PC-3 (cell line): ENCODE measurements at regions of chrX and their contacts with region 1.

Region 1: DNA sequence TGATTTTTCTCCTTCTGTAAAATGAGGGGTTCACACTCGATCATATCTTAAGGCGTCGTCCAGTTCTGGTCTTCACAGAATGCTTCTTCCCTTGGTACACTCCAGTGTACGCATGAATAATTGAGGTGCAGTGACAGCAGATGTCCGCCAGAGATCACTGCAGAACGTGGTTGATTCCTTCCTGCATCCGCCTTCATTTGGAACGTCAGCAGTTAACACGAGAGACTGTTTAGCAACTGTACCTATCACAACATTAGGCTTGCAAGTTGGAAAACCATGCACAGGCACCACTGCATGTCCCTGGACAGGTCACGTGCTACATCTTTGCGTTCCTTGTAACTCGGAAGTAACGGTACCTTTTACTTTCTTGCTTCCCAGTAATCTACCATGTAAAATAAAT is 66.0 kb upstream of the GEMIN8 start:
- DNase-seq: peak; percentile 78
- ATAC-seq: peak; percentile 84
- H3K4me3 ChIP-seq: no peak overlapping the region
- H3K27ac ChIP-seq: no peak overlapping the region
- H3K4me1 ChIP-seq: no peaks in the 10 kb centered on the region
- H3K27me3 ChIP-seq: peaks cover 19% of the 10 kb centered on the region
- CTCF ChIP-seq: peak; percentile 81

Region 2: GRCh38 chrX:14051416-14051815 is 44.3 kb before region 1 on chrX:
- CTCF ChIA-PET with region 1: no interaction called
- POLR2A ChIA-PET with region 1: no interaction called
- intact Hi-C with region 1: loop called (anchors 5 kb)
- DNase-seq: peak; percentile 46
- ATAC-seq: peak; percentile 58; the same call in 1 of the 2 replicates
- H3K4me3 ChIP-seq: no peak overlapping the region
- H3K27ac ChIP-seq: no peak overlapping the region
- H3K4me1 ChIP-seq: no peaks in the 10 kb centered on the region
- H3K27me3 ChIP-seq: peaks cover 3% of the 10 kb centered on the region
- CTCF ChIP-seq: peak; percentile 46

Region 3: DNA sequence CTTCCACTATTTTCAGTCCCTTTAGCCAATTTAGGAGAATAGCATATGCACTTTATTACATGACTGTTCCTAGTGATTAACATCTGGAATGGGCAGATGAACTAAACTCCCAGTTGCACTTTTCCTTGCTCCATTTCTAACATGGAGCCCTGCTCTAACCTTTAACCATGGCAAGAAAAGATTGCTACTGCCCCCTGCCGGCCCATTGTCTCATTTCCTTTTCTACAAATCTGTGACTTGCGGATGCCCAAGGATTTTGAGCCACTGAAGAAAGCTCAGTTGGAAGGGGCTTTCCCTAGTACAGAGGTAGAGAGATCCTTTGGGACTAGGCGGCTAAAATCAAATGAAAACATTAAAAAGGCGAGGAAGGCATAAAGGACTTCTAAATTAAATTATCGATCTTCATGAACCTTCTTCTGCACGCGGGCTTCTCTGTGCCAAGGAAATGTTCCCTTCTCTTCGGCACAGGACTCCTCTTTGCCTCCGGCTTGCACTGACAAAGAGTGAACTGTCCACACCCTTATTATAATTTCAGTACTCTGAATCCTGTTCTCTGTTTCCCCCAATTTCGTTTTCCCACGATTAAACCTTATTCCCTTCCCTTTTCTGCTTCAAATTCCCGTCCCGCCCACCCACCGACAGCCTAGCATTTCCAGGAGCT is 433.1 kb after region 1 on chrX:
- CTCF ChIA-PET with region 1: no interaction called
- POLR2A ChIA-PET with region 1: no interaction called
- intact Hi-C with region 1: loop called (anchors 5 kb)
- DNase-seq: peak; percentile 71
- ATAC-seq: no peak; the same call in 1 of the 2 replicates
- H3K4me3 ChIP-seq: no peak overlapping the region
- H3K27ac ChIP-seq: no peak overlapping the region
- H3K4me1 ChIP-seq: peaks cover 6% of the 10 kb centered on the region; the same call in 1 of the 2 replicates
- H3K27me3 ChIP-seq: no peaks in the 10 kb centered on the region
- CTCF ChIP-seq: peak; percentile 69

Region 4: GRCh38 chrX:14630733-14631132 is 535.0 kb after region 1 on chrX:
- CTCF ChIA-PET with region 1: no interaction called
- POLR2A ChIA-PET with region 1: no interaction called
- intact Hi-C with region 1: loop called (anchors 1 kb)
- DNase-seq: peak; percentile 47
- ATAC-seq: peak; percentile 66
- H3K4me3 ChIP-seq: no peak overlapping the region
- H3K27ac ChIP-seq: no peak overlapping the region
- H3K4me1 ChIP-seq: no peaks in the 10 kb centered on the region
- H3K27me3 ChIP-seq: no peaks in the 10 kb centered on the region
- CTCF ChIP-seq: peak; percentile 44; the same call in 1 of the 2 replicates

Region 5: DNA sequence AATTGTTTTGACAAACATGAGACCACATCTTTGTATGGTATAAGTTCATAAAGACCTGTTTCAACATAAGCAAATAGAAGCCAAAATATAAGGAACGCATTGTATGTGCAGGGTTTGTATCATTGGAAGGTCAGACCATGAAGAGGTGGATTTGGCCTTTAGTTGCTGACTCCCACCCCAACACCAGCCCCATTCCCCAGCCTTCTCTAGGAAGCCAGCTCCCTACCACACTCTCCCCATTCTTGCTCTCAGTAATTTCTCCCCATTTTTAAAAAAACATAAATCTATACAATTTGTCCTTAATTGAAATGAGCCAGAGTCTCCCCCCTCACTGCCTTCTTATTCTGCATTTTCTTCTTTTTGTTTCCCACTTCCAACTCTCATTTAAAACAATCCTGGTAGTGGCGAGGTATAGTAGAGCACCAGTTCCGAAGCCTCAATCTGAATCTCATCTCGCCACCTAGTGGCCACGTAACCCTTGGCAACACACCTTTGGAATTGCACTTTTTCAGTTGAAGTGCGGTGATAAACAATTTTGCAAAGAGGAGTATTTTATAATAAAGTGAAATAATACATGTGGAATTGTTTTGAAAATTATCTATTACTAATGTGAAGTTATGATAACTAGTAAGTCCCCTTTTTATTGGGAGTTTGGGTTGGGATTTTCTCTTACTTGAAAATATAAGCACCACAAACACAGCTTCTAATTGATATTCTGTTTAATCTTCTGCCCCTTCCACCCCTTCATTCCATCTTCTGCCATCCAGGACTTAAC is 1047.5 kb after region 1 on chrX:
- CTCF ChIA-PET with region 1: no interaction called
- POLR2A ChIA-PET with region 1: no interaction called
- intact Hi-C with region 1: loop called (anchors 1 kb)
- DNase-seq: peak; percentile 75
- ATAC-seq: peak; percentile 88
- H3K4me3 ChIP-seq: no peak overlapping the region
- H3K27ac ChIP-seq: no peak overlapping the region
- H3K4me1 ChIP-seq: no peaks in the 10 kb centered on the region
- H3K27me3 ChIP-seq: no peaks in the 10 kb centered on the region
- CTCF ChIP-seq: peak; percentile 90

Region 6: DNA sequence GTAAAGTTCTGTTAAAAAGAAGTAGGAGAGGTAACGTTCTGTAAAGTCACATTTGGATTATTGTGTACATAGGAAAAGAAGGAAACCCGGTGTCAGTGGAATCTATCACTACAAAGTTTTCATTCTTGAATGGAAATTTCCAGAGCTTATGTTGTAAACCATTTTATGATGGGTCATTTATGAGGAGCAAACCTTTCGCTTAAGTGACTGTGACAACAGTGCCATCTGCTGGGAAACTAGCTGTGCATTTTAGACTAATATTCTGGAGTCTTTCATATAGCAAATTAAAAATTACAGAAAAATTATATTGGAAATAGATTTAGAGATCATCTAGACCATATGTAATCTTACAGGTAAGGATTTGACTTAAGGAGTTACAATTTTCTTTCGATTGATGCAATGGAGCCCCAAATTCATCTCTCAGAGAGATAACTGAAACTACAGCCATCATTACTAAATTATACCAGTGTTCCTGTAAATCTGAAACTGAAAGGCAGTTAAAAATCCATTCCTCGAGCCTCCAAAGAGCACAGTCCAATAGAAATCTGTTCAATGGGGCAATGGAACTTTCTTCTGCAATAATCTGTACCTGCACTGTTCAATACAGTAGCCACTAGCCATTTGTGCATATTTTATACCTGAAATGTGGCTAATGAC is 1147.3 kb after region 1 on chrX:
- CTCF ChIA-PET with region 1: no interaction called
- POLR2A ChIA-PET with region 1: no interaction called
- intact Hi-C with region 1: loop called (anchors 2 kb)
- DNase-seq: peak; percentile 76
- ATAC-seq: peak; percentile 59
- H3K4me3 ChIP-seq: no peak overlapping the region
- H3K27ac ChIP-seq: no peak overlapping the region
- H3K4me1 ChIP-seq: no peaks in the 10 kb centered on the region
- H3K27me3 ChIP-seq: no peaks in the 10 kb centered on the region
- CTCF ChIP-seq: peak; percentile 72